ENCODE measurements at regions of chr14 and their contacts with region 1.

Region 1: GRCh38 chr14:89040460-89041259 is 216.2 kb downstream of the TTC8 start:
- DNase-seq: peak; percentile 91
- H3K4me3 Mint-ChIP-seq: peak overlapping the region; percentile 68
- H3K27ac Mint-ChIP-seq: peak overlapping the region; percentile 24
- H3K4me1 Mint-ChIP-seq: peaks cover 8% of the 10 kb centered on the region
- H3K27me3 Mint-ChIP-seq: no peaks in the 10 kb centered on the region
- CTCF ChIP-seq: peak; percentile 98

Region 2: GRCh38 chr14:89056394-89056793 is 15.7 kb after region 1 on chr14:
- CTCF ChIA-PET with region 1: no interaction called
- POLR2A ChIA-PET with region 1: no interaction called
- intact Hi-C with region 1: no loop called
- DNase-seq: no peak
- H3K4me3 Mint-ChIP-seq: no peak overlapping the region
- H3K27ac Mint-ChIP-seq: no peak overlapping the region
- H3K4me1 Mint-ChIP-seq: no peaks in the 10 kb centered on the region
- H3K27me3 Mint-ChIP-seq: no peaks in the 10 kb centered on the region
- CTCF ChIP-seq: no peak

Region 3: GRCh38 chr14:89237921-89238529 is 197.4 kb after region 1 on chr14:
- CTCF ChIA-PET with region 1: interaction called, 25 read pairs
- POLR2A ChIA-PET with region 1: interaction called, 4 read pairs
- intact Hi-C with region 1: loop called (anchors 1 kb)
- DNase-seq: peak; percentile 24
- H3K4me3 Mint-ChIP-seq: no peak overlapping the region
- H3K27ac Mint-ChIP-seq: no peak overlapping the region
- H3K4me1 Mint-ChIP-seq: no peaks in the 10 kb centered on the region
- H3K27me3 Mint-ChIP-seq: no peaks in the 10 kb centered on the region
- CTCF ChIP-seq: peak; percentile 33

Measured in MCF 10A (cell line).